ENCODE measurements at regions of chr9 and their contacts with region 1.

Region 1: GRCh38 chr9:93682232-93682968 is 106.0 kb downstream of the PHF2 start:
- DNase-seq: peak; percentile 76
- ATAC-seq: peak; percentile 73

Region 2: GRCh38 chr9:93843396-93843795 is 161.0 kb after region 1 on chr9:
- intact Hi-C with region 1: no loop called
- DNase-seq: no peak
- ATAC-seq: no peak

Region 3: DNA sequence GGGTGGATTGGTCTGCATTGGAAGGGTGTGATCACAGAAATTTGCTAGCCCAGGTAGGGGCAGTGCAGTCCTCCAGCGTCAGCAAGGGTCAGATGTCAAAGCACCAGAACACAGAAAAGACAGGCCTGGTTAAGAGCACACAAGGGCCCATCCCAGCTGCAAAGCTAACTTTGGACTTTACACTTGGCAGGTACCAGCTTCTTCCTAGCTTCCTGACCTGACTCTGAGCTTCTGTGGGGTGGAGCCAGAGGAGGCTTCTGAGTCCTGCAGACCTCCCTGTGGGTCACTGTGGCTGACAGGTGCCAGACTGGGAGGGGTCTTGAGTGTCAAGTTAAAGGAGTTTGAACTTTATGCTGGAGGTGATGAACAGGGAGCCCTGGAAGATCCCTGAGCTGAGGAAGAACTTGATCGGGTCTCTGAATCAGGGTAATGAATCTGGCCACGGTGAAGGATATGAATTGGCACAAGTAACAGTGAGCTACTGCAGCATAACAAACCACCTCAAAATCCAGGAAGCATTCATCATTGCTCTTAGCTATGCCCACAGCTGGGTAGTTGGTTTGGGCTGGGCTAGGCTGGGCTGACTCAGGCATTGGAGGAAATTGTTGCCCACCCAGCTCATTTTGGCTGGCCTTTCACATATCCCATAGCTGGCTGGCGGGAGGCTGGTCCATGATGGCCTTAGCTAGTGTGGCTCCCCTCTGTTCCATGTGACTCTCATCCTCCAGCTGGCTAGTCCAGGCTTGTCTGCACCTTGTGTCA is 209.3 kb after region 1 on chr9:
- intact Hi-C with region 1: no loop called
- DNase-seq: peak; percentile 13
- ATAC-seq: no peak

Region 4: DNA sequence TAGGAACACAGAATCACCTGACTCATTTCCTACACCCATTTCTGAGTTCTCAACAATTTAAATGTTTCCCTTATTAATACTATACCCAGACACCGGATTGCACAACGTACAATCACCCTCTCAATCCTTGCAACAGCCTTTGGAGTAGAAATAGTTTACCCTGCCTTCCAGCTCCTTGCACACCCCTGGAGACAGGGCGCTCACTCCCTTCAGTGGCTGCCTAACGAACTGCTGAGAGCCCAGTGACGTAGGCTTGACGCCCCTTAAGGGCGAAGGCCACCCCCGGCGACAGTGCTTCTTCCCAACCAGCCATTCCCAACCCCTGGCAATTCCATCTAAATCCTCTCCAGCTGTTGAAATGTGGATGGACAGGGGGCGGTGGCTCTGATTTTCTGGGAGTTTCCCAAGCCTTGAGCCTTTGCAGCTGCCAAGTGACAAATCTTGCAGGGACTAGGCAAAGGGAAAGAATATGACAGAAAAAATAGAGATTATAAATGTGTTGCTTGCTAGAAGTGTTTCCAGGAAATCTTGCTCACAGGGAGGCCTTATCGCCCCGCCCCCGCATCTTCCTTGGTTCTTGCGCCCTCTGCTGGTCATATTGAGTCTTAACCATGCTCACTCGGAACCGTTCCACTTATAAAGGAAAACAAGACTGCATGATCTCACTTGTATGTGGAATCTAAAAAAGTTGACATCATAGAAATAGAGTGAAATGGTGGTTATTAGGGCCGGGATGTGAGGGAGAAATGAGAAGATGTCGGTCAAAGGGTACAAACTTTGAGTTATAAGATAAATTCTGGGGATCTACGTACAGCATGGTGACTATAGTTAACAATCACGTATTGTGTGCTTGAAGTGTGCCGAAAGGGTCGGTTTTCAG is 280.4 kb after region 1 on chr9:
- intact Hi-C with region 1: loop called (anchors 2 kb)
- DNase-seq: peak; percentile 88
- ATAC-seq: peak; percentile 93